ENCODE measurements at regions of chr4 and their contacts with region 1.

Region 1: DNA sequence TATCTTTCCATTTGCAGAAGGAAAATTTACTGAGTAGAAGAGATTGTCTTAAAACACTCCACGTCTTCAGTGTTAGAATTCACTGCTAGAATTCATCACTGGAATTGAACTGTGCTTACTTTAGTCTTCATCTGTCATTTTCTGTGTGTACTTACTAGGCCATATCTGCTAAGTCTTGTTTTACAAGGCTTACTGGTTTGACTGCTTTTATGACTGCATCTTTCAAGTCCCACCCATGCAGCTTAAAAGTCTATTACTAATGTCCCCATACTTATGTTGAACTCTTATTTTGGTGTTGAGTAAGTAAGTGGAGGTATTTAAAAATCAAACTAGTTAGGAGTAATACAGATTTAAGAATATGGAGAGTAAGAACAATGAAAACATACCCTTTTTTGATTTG is 14.6 kb downstream of the CLCN3 start:
- DNase-seq: peak in 1 of 2 experiments; percentile 92
- H3K4me3 ChIP-seq: no peak overlapping the region; the same call in 1 of the 2 replicates
- H3K27ac ChIP-seq: peak overlapping the region; percentile 54
- H3K4me1 ChIP-seq: peaks cover 25% of the 10 kb centered on the region
- H3K27me3 ChIP-seq: no peaks in the 10 kb centered on the region
- CTCF ChIP-seq: no peak

Region 2: DNA sequence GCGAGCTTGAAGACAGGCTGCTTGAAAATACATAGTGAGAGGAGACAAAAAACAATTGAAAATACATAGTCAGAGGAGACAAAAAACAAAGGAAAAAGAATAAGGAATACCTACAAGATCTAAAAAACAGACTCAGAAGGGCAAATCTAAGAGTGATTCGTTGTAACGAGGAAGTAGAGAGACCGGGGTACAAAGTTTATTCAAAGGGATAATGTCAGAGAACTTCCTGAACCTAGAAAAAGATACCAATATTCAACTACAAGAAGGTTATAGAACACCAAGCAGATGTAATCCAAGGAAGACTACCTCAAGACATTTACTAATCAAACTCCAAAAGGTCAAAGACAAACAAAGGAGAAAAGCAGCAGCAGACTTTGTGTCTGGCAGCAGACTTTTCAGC is 188.2 kb before region 1 on chr4:
- CTCF ChIA-PET with region 1: no interaction called
- POLR2A ChIA-PET with region 1: no interaction called
- intact Hi-C with region 1: no loop called
- DNase-seq: no peak
- H3K4me3 ChIP-seq: no peak overlapping the region
- H3K27ac ChIP-seq: no peak overlapping the region
- H3K4me1 ChIP-seq: no peaks in the 10 kb centered on the region
- H3K27me3 ChIP-seq: no peaks in the 10 kb centered on the region
- CTCF ChIP-seq: no peak

Region 3: DNA sequence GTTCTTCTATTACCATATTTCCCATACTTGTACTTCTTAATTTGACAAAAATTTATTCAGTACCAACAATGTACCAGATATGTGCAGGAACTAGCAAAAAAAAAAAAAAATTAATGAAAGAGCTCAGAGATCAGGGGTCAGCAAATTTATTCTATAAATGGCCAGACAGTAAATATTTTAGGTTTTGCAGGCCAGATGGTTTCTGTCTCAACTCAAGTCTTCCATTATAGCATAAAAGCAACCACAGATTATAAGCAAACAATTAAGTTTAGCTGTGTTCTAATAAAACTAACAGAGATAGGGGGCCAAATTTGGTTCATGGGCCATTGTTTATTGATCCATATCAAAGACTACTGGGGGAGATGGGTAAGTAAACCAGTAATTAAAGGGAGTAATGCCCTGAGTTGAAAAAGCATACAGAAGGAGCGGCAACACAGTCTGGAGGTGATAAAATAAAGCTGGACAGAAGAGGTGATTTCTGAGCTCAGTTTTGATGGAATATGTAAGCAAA is 41.9 kb before region 1 on chr4:
- CTCF ChIA-PET with region 1: no interaction called
- POLR2A ChIA-PET with region 1: no interaction called
- intact Hi-C with region 1: no loop called
- DNase-seq: no peak
- H3K4me3 ChIP-seq: no peak overlapping the region
- H3K27ac ChIP-seq: no peak overlapping the region
- H3K4me1 ChIP-seq: no peaks in the 10 kb centered on the region
- H3K27me3 ChIP-seq: no peaks in the 10 kb centered on the region
- CTCF ChIP-seq: no peak

Region 4: DNA sequence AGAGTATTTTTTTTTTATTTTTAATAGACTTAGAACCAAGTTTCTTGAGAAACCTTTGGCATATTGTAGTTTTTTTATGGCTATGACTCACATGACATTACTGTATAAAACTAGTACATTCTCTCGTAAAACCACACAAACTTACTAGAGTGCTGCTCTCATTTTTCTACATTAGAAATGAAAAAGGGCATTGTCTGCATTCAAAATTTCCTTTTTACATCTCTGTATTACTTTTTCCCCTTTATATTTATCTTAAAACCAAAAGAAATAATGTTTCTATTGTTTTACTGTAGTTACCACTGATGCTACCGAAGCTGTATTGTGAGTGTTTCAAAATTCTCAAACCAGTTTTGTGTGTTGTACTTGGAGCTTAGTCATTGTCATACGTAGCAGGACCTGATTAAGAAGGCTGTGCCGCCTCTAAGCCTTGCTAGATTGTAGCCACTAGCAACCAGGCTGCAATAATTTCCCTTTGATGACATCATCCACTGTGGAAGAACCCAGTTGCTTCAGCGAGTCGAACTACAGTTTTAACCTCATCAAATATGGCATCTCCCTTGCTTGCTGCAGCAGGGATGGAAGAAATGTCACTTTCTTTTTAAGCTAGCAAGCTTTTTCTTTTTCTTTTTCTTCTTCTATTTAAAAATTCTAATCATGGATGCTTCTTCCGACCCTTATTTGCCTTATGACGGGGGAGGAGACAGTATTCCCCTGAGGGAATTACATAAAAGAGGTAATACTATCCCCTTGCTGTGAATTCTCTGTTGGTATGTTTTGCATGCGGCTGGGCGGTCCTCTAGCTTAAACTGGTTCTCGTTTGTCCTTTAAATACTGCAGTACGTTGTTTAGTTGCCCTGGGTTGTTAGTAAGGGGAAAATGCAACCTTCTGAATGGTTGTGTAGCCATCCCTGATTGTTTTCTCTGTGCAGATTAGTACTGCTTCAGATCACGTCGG is 25.0 kb after region 1 on chr4:
- CTCF ChIA-PET with region 1: no interaction called
- POLR2A ChIA-PET with region 1: no interaction called
- intact Hi-C with region 1: loop called (anchors 1 kb)
- DNase-seq: peak; percentile 77 to 97
- H3K4me3 ChIP-seq: peak overlapping the region; percentile 68
- H3K27ac ChIP-seq: peak overlapping the region; percentile 98
- H3K4me1 ChIP-seq: peaks cover 47% of the 10 kb centered on the region
- H3K27me3 ChIP-seq: no peaks in the 10 kb centered on the region
- CTCF ChIP-seq: no peak

Region 5: DNA sequence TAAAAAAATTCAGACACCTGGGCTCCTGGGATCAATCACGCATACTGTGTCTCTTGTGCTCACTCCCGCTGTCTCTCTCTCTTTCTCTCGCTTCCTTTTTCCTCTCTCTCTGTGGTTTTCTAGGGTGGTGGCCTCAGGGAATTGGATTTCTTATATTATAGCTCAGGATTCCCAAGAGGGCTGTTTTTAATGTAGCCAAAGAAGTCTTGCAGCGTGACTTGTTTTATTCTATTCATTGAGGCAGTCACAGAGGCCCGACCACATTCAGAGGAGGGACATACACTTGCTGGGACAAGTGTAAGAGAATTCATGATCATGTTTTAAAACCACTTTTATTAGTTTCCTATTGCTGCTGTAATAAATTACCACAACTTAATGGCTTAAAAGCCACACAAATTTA is 63.4 kb after region 1 on chr4:
- CTCF ChIA-PET with region 1: no interaction called
- POLR2A ChIA-PET with region 1: no interaction called
- intact Hi-C with region 1: no loop called
- DNase-seq: no peak
- H3K4me3 ChIP-seq: no peak overlapping the region
- H3K27ac ChIP-seq: no peak overlapping the region
- H3K4me1 ChIP-seq: no peaks in the 10 kb centered on the region
- H3K27me3 ChIP-seq: no peaks in the 10 kb centered on the region
- CTCF ChIP-seq: no peak